Activated naive CD4-positive, alpha-beta T cell treated with anti-CD3 and anti-CD28 coated beads, Interleukin-2, amount 10 ng/mL, durations not matched to agents 7 days and 5 days (primary cell): ENCODE measurements at regions of chr14 and their contacts with region 1.

Region 1: GRCh38 chr14:54347997-54348611 is 48.7 kb upstream of the CDKN3 start:
- DNase-seq: no peak
- H3K4me3 Mint-ChIP-seq: no peak overlapping the region
- H3K27ac Mint-ChIP-seq: no peak overlapping the region
- H3K4me1 Mint-ChIP-seq: peaks cover 4% of the 10 kb centered on the region
- H3K27me3 Mint-ChIP-seq: peaks cover 6% of the 10 kb centered on the region

Region 2: DNA sequence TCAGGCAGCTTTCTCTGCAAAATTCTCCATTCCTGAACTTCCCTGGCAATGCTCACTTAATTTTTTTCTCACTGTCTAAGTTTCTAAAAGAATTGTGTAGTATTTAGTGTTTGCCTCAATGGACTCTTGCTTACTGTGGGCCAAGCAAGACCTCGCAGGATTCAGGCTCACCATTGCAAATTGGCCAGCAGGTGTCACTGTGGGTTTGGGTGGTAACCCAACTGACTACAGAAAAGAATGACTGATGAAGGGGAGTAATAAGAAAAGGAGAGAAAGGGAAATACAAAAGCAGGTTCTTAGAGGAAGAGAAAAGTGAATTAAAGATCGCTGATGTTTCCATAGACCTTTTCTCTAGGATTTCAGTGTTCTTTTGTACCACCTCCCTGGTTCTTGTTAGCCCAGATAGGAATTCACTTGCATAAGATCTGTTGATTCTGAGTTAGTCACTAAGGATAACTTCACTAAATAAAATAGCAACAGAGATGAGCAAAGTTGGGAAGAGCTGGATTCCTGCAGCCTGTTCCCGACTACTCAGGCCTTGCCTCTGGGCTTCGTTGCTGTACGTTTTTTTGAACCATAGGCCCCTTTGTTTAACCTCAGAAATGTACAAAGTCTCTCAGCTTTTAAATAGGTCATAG is 808.5 kb before region 1 on chr14:
- CTCF ChIA-PET with region 1: interaction called, 13 read pairs
- DNase-seq: peak; percentile 66
- H3K4me3 Mint-ChIP-seq: no peak overlapping the region
- H3K27ac Mint-ChIP-seq: no peak overlapping the region
- H3K4me1 Mint-ChIP-seq: no peaks in the 10 kb centered on the region
- H3K27me3 Mint-ChIP-seq: peaks cover 6% of the 10 kb centered on the region

Region 3: DNA sequence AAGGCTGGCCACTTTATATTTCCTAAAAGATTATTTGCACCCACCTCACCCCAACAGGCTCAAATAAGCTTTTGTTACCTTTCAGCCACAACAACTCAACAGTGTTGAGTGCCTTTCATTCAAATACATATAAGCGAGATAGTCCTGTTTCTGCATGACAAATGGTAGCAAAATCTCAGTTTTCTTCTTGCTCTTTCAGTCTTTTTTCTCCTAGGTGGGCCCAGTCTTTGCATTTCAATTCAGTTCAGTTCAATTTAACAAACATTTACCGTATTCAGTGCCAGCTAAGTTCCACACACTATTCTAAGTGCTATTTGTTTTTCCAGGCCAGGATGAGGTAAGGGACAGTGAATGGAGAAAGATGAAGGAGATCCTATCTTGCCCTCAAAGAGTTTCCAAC is 365.6 kb before region 1 on chr14:
- CTCF ChIA-PET with region 1: no interaction called
- DNase-seq: no peak
- H3K4me3 Mint-ChIP-seq: no peak overlapping the region
- H3K27ac Mint-ChIP-seq: no peak overlapping the region
- H3K4me1 Mint-ChIP-seq: no peaks in the 10 kb centered on the region
- H3K27me3 Mint-ChIP-seq: no peaks in the 10 kb centered on the region

Region 4: DNA sequence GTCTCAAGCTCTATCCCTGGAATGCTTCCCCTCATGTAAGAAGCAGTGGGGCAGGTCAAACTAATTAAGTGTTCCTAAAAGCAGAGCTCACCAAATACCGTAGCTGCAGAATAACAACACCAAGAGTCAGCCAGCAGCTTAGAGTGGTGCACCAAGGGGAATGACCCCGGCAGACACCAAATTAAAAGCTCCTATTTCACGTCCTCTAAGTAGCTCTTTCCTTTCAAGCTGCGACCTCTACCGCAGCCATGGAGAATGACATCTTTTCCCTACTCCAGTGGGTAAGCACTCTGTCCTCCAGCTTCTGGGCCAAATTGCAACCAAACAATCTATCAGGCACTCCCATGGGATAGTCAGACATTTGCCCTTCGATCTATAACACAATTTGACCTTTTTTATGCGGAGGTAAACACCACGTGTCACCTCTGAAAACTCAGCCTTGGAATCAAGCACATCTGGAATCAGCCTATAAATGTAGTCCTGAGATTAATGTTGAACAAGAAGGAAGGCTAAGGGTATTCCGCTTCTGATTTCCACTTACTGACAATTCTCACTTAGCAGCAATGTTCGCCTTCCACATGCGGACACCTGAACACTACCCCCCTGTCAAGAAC is 18.9 kb before region 1 on chr14:
- CTCF ChIA-PET with region 1: interaction called, 14 read pairs
- DNase-seq: peak; percentile 39
- H3K4me3 Mint-ChIP-seq: no peak overlapping the region
- H3K27ac Mint-ChIP-seq: no peak overlapping the region
- H3K4me1 Mint-ChIP-seq: no peaks in the 10 kb centered on the region
- H3K27me3 Mint-ChIP-seq: peaks cover 11% of the 10 kb centered on the region